ENCODE measurements at regions of chr2 and their contacts with region 1.

Region 1: DNA sequence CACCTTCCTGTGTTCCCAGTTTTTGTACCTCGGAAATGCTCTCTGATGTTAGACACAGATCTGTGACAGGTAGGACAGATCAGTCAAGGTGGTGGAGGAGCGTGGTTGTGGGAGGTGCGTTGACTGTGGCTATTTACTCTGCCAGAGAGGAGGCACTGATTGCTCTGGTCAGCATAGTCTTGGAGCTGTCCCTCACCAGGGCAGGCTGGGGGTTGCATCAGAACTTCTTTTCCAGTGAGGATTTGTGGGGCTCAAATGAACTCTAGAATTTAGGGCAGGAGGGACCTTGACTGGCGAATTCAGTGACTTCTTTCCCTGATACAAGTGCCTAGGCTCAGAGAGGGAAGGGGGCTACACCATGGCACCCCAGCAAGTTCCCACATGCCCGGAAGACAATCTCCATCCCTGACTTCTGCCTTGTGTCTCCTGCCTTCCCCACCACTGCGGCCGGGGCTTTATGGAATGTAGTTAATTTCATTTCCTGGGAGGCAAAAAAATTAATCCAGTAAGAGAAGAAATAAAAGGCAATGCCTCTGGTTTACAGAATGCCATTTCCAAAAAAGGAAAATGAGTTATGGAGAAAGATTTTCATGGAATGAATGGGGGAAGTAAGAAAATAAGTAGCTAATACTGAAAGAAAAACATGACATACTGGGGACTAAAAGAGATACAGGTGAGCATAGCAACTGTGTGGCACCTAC is 26.1 kb downstream of the NIFK start:
- DNase-seq: peak; percentile 41
- H3K4me3 ChIP-seq: no peak overlapping the region
- H3K27ac ChIP-seq: no peak overlapping the region
- H3K4me1 ChIP-seq: peaks cover 30% of the 10 kb centered on the region
- H3K27me3 ChIP-seq: no peaks in the 10 kb centered on the region
- CTCF ChIP-seq: no peak

Region 2: GRCh38 chr2:121539750-121540469 is 170.7 kb before region 1 on chr2:
- CTCF ChIA-PET with region 1: no interaction called
- dilution Hi-C with region 1: no loop called
- in situ Hi-C with region 1: loop called in 1 of 2 experiments (anchors 10 kb)
- intact Hi-C with region 1: no loop called
- DNase-seq: no peak
- H3K4me3 ChIP-seq: no peak overlapping the region
- H3K27ac ChIP-seq: no peak overlapping the region
- H3K4me1 ChIP-seq: peaks cover 8% of the 10 kb centered on the region
- H3K27me3 ChIP-seq: no peaks in the 10 kb centered on the region
- CTCF ChIP-seq: no peak

Region 3: GRCh38 chr2:121699421-121700333 is 10.9 kb before region 1 on chr2:
- CTCF ChIA-PET with region 1: interaction called, 15 read pairs
- dilution Hi-C with region 1: no loop called
- in situ Hi-C with region 1: no loop called
- intact Hi-C with region 1: no loop called
- DNase-seq: peak; percentile 94
- H3K4me3 ChIP-seq: no peak overlapping the region
- H3K27ac ChIP-seq: peak overlapping the region; percentile 87
- H3K4me1 ChIP-seq: peaks cover 57% of the 10 kb centered on the region
- H3K27me3 ChIP-seq: no peaks in the 10 kb centered on the region
- CTCF ChIP-seq: no peak

Measured in mammary epithelial cell (primary cell).